B cell (primary cell): ENCODE measurements at regions of chr6 and their contacts with region 1.

Region 1: GRCh38 chr6:130115036-130115435 is 96.7 kb downstream of the L3MBTL3 start:
- DNase-seq: peak; percentile 77
- ATAC-seq: peak; percentile 90
- H3K4me3 ChIP-seq: peak overlapping the region in 2 of 5 experiments; percentile 9 to 20
- H3K4me3 Mint-ChIP-seq: peak overlapping the region; percentile 82
- H3K27ac ChIP-seq: peak overlapping the region; percentile 88 to 91
- H3K27ac Mint-ChIP-seq: peak overlapping the region; percentile 94
- H3K4me1 ChIP-seq: peaks cover 49 to 55% of the 10 kb centered on the region in 2 donors
- H3K4me1 Mint-ChIP-seq: peaks cover 75% of the 10 kb centered on the region
- H3K27me3 ChIP-seq: no peaks in the 10 kb centered on the region
- H3K27me3 Mint-ChIP-seq: no peaks in the 10 kb centered on the region
- CTCF ChIP-seq: no peak

Region 2: GRCh38 chr6:130093546-130093945 is 21.5 kb before region 1 on chr6:
- CTCF ChIA-PET with region 1: no interaction called
- POLR2A ChIA-PET with region 1: no interaction called
- intact Hi-C with region 1: loop called (anchors 2 kb)
- DNase-seq: no peak
- ATAC-seq: no peak
- H3K4me3 ChIP-seq: no peak overlapping the region
- H3K4me3 Mint-ChIP-seq: no peak overlapping the region
- H3K27ac ChIP-seq: no peak overlapping the region
- H3K27ac Mint-ChIP-seq: no peak overlapping the region
- H3K4me1 ChIP-seq: peaks cover 3 to 7% of the 10 kb centered on the region in 2 donors
- H3K4me1 Mint-ChIP-seq: peaks cover 9% of the 10 kb centered on the region
- H3K27me3 ChIP-seq: no peaks in the 10 kb centered on the region
- H3K27me3 Mint-ChIP-seq: no peaks in the 10 kb centered on the region
- CTCF ChIP-seq: no peak

Region 3: DNA sequence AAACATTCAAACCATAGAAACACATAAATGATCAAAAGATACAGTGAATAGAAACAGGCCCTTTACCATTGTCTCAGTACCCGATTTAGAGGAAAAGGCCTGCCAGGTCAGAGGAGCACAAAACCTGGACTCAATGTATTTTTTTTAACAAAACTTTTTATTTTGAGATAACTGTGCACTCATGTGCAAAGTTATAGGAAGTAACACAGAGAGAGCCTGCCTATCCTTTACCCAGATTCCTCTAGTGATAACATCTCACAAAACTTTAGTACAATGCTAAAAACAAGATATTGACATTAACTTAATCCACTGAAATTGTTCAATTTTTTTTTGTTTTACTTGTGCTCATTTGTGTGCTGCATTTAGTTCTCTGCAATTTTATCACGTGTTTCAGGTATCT is 144.5 kb after region 1 on chr6:
- CTCF ChIA-PET with region 1: no interaction called
- POLR2A ChIA-PET with region 1: no interaction called
- intact Hi-C with region 1: loop called (anchors 5 kb)
- DNase-seq: no peak
- ATAC-seq: peak; percentile 59
- H3K4me3 ChIP-seq: peak overlapping the region in 1 of 5 experiments; percentile 8
- H3K4me3 Mint-ChIP-seq: peak overlapping the region; percentile 88
- H3K27ac ChIP-seq: peak overlapping the region; percentile 80 to 81
- H3K27ac Mint-ChIP-seq: peak overlapping the region; percentile 94
- H3K4me1 ChIP-seq: peaks cover 23 to 28% of the 10 kb centered on the region in 2 donors
- H3K4me1 Mint-ChIP-seq: peaks cover 40% of the 10 kb centered on the region
- H3K27me3 ChIP-seq: no peaks in the 10 kb centered on the region
- H3K27me3 Mint-ChIP-seq: no peaks in the 10 kb centered on the region
- CTCF ChIP-seq: no peak